Activated T-helper 1 cell treated with anti-CD3 and anti-CD28 coated beads, Interleukin-12 subunit alpha, Interleukin-12 subunit beta, Interleukin-2, Interleukin-4 antibody, amounts not matched to agents 30 ng/mL and 10 ng/mL and 1 ng/mL, durations not matched to agents 14 hours and 24 hours and 36 hours (primary cell): ENCODE measurements at regions of chr10 and their contacts with region 1.

Region 1: GRCh38 chr10:62681211-62681940 is 123.1 kb upstream of the ADO start:
- DNase-seq: peak; percentile 80
- H3K4me3 Mint-ChIP-seq: peak overlapping the region; percentile 69
- H3K27ac Mint-ChIP-seq: peak overlapping the region; percentile 95
- H3K4me1 Mint-ChIP-seq: peaks cover 77% of the 10 kb centered on the region
- H3K27me3 Mint-ChIP-seq: no peaks in the 10 kb centered on the region

Region 2: DNA sequence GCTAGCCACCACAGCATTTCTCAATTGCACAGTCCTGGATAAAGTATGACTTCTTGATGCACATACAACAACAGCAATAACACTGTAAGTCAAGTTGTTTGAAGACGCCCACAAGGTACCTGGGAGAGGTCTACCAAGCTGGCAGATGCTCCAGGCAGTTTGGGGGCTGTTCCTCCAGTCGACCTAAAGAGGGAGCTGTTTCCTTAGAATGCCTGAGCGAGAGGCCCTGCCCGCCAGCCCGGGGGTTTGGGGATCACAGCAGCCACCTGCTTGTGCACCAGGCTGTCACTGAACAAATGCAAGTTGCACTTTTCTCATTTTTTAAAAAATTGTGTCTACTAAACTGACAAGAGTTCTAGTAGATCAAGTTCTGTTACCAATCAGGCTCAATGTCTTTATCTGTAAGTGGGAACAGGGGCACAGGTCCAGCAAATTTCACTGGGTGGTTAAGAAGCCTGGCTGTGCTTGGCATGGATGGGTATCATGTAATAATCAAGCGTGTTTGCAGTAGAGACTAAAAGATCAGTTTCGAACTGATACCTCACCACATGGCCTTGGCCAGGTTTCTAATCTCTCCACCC is 70.6 kb before region 1 on chr10:
- intact Hi-C with region 1: loop called (anchors 1 kb)
- DNase-seq: peak; percentile 65
- H3K4me3 Mint-ChIP-seq: no peak overlapping the region
- H3K27ac Mint-ChIP-seq: peak overlapping the region; percentile 11
- H3K4me1 Mint-ChIP-seq: peaks cover 59% of the 10 kb centered on the region
- H3K27me3 Mint-ChIP-seq: peaks cover 9% of the 10 kb centered on the region

Region 3: GRCh38 chr10:62647375-62648092 is 33.8 kb before region 1 on chr10:
- intact Hi-C with region 1: loop called (anchors 1 kb)
- DNase-seq: no peak
- H3K4me3 Mint-ChIP-seq: peak overlapping the region; percentile 15
- H3K27ac Mint-ChIP-seq: peak overlapping the region; percentile 77
- H3K4me1 Mint-ChIP-seq: peaks cover 65% of the 10 kb centered on the region
- H3K27me3 Mint-ChIP-seq: peaks cover 2% of the 10 kb centered on the region

Region 4: GRCh38 chr10:62726142-62726541 is 44.8 kb after region 1 on chr10:
- intact Hi-C with region 1: loop called (anchors 1 kb)
- DNase-seq: peak; percentile 16
- H3K4me3 Mint-ChIP-seq: peak overlapping the region; percentile 25
- H3K27ac Mint-ChIP-seq: peak overlapping the region; percentile 72
- H3K4me1 Mint-ChIP-seq: peaks cover 52% of the 10 kb centered on the region
- H3K27me3 Mint-ChIP-seq: peaks cover 8% of the 10 kb centered on the region

Region 5: DNA sequence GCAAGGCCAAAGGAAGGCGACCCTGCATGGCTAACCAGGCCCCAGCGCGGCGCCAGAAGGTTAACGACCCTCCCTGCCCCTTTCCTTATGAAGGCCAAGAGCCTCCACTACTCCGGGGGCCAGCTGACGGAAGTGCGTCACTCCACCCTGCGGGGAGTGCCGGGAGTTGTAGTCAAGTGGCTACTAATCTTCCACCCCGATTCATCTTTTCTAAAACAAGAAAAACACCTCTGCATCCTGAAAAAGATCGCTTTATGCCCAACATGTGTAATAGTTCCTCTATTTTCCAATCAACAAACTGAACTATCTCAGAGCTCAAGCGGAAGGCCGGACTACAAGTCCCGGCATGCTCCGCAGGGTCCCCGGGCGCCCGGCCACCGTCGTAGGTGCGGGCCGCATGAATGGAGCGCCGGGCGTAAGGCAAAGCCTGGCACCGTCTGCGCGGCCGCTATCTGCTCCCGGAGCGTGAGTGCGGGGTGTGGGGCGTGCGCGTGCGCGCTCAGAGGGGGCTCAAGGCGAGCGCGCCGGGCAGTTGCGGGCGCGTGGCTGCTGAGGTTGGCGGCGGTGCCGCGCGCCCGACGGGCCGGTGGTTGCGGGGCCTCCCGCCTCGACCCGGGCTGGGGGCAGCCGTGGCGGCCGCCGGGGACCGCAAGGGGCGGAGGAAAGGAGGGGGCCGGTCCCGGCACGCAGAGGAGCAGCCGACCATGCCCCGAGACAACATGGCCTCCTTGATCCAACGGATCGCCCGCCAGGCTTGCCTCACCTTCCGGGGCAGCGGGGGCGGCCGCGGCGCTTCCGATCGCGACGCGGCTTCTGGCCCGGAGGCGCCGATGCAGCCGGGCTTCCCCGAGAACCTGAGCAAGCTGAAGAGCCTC is 123.2 kb after region 1 on chr10 and contains the start of gene ADO:
- intact Hi-C with region 1: loop called (anchors 1 kb)
- DNase-seq: peak; percentile 68
- H3K4me3 Mint-ChIP-seq: peak within 1 kb of the TSS; percentile 90
- H3K27ac Mint-ChIP-seq: peak within 1 kb of the TSS; percentile 95
- H3K4me1 Mint-ChIP-seq: peaks cover 41% of the 10 kb centered on the region
- H3K27me3 Mint-ChIP-seq: peaks cover 11% of the 10 kb centered on the region
- total RNA-seq, gene ADO: 52.3 and 55.8 TPM in 2 replicates

Region 6: GRCh38 chr10:62992145-62992721 is 310.9 kb after region 1 on chr10:
- intact Hi-C with region 1: loop called (anchors 1 kb)
- DNase-seq: no peak
- H3K4me3 Mint-ChIP-seq: peak overlapping the region; percentile 58
- H3K27ac Mint-ChIP-seq: peak overlapping the region; percentile 94
- H3K4me1 Mint-ChIP-seq: peaks cover 52% of the 10 kb centered on the region
- H3K27me3 Mint-ChIP-seq: peaks cover 4% of the 10 kb centered on the region

Region 7: GRCh38 chr10:63133056-63133820 is 451.9 kb after region 1 on chr10 and contains the start of gene NRBF2:
- intact Hi-C with region 1: loop called (anchors 1 kb)
- DNase-seq: peak; percentile 97
- H3K4me3 Mint-ChIP-seq: peak within 1 kb of the TSS; percentile 91
- H3K27ac Mint-ChIP-seq: peak within 1 kb of the TSS; percentile 83
- H3K4me1 Mint-ChIP-seq: peaks cover 32% of the 10 kb centered on the region
- H3K27me3 Mint-ChIP-seq: peaks cover 3% of the 10 kb centered on the region
- total RNA-seq, gene NRBF2: 30.0 and 30.8 TPM in 2 replicates